Activated naive CD4-positive, alpha-beta T cell treated with anti-CD3 and anti-CD28 coated beads, Interleukin-2, amount 10 ng/mL, durations not matched to agents 7 days and 5 days (primary cell): ENCODE measurements at regions of chr6 and their contacts with region 1.

Region 1: GRCh38 chr6:132768051-132768517 is 10.4 kb upstream of the VNN2 start:
- DNase-seq: peak; percentile 50
- H3K4me3 Mint-ChIP-seq: no peak overlapping the region
- H3K27ac Mint-ChIP-seq: no peak overlapping the region
- H3K4me1 Mint-ChIP-seq: peaks cover 15% of the 10 kb centered on the region
- H3K27me3 Mint-ChIP-seq: no peaks in the 10 kb centered on the region

Region 2: GRCh38 chr6:132633362-132633761 is 134.7 kb before region 1 on chr6:
- CTCF ChIA-PET with region 1: no interaction called
- DNase-seq: no peak
- H3K4me3 Mint-ChIP-seq: no peak overlapping the region
- H3K27ac Mint-ChIP-seq: no peak overlapping the region
- H3K4me1 Mint-ChIP-seq: no peaks in the 10 kb centered on the region
- H3K27me3 Mint-ChIP-seq: peaks cover 25% of the 10 kb centered on the region

Region 3: DNA sequence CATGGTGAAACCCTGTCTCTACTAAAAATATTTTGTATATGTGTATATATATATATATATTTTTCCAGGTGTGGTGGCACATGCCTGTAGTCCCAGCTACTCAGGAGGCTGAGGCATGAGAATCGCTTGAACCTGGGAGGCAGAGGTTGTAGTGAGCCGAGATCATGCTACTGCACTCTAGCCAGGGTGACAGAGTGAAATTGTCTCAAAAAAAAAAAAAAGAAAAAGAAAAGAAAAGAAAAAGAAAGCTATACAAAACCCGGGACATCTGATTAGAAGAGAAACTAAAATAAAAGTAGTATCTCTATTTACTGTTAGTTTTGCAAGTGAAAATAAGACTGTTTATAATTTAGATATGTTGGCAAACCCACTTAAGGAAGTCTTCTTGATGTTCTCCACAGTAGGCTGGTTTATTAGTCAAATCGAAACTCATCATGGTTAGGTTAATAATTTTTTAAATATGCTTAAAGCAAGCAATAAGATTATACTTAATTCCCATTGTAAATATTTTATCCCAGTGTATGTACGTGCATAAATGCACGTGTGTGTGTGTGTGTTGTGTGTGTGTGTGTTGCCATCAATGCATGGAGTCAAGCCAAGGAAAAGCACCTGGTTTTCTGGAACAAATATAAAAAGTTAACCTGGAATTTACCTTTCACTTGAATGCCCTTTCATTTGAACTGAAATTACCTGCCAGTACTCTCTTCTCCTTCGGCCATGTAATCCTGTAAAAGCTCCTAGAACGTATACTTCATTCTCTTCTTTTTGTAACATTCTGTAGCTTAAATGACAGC is 17.4 kb before region 1 on chr6:
- CTCF ChIA-PET with region 1: interaction called, 11 read pairs
- DNase-seq: no peak
- H3K4me3 Mint-ChIP-seq: no peak overlapping the region
- H3K27ac Mint-ChIP-seq: peak overlapping the region; percentile 49
- H3K4me1 Mint-ChIP-seq: peaks cover 29% of the 10 kb centered on the region
- H3K27me3 Mint-ChIP-seq: no peaks in the 10 kb centered on the region